RWPE1 (cell line): ENCODE measurements at regions of chr4 and their contacts with region 1.

Region 1: GRCh38 chr4:113243312-113243711 is 193.9 kb downstream of the ANK2 start:
- DNase-seq: no peak
- H3K27ac ChIP-seq: no peak overlapping the region
- CTCF ChIP-seq: no peak

Region 2: GRCh38 chr4:113221990-113222389 is 21.3 kb before region 1 on chr4:
- CTCF ChIA-PET with region 1: interaction called, 10 read pairs
- POLR2A ChIA-PET with region 1: no interaction called
- DNase-seq: no peak
- H3K27ac ChIP-seq: no peak overlapping the region
- CTCF ChIP-seq: no peak

Region 3: GRCh38 chr4:113300471-113300928 is 57.2 kb after region 1 on chr4:
- CTCF ChIA-PET with region 1: no interaction called
- POLR2A ChIA-PET with region 1: no interaction called
- DNase-seq: peak; percentile 36
- H3K27ac ChIP-seq: no peak overlapping the region
- CTCF ChIP-seq: no peak